Activated naive CD8-positive, alpha-beta T cell treated with anti-CD3 and anti-CD28 coated beads, Interleukin-2, amount 10 ng/mL, durations not matched to agents 7 days and 5 days (primary cell): ENCODE measurements at regions of chr19 and their contacts with region 1.

Region 1: GRCh38 chr19:21505459-21506451 is at the start of gene ZNF429:
- DNase-seq: peak; percentile 79
- ATAC-seq: peak; percentile 100
- H3K4me3 Mint-ChIP-seq: peak within 1 kb of the TSS; percentile 99
- H3K27ac Mint-ChIP-seq: peak within 1 kb of the TSS; percentile 99
- H3K4me1 Mint-ChIP-seq: peaks cover 10% of the 10 kb centered on the region
- H3K27me3 Mint-ChIP-seq: no peaks in the 10 kb centered on the region
- total RNA-seq, gene ZNF429: 14.3 to 14.8 TPM

Region 2: GRCh38 chr19:20923077-20923871 is 582.5 kb before region 1 on chr19 and contains the start of gene ZNF85:
- POLR2A ChIA-PET with region 1: interaction called, 16 read pairs
- DNase-seq: peak; percentile 85
- ATAC-seq: peak; percentile 99
- H3K4me3 Mint-ChIP-seq: peak within 1 kb of the TSS; percentile 97
- H3K27ac Mint-ChIP-seq: peak within 1 kb of the TSS; percentile 99
- H3K4me1 Mint-ChIP-seq: peaks cover 13% of the 10 kb centered on the region
- H3K27me3 Mint-ChIP-seq: no peaks in the 10 kb centered on the region
- total RNA-seq, gene ZNF85: 22.7 to 25.0 TPM

Region 3: GRCh38 chr19:21328885-21329605 is 176.7 kb before region 1 on chr19 and contains the start of gene ZNF708:
- POLR2A ChIA-PET with region 1: interaction called, 17 read pairs
- DNase-seq: peak; percentile 77
- ATAC-seq: peak; percentile 100
- H3K4me3 Mint-ChIP-seq: peak within 1 kb of the TSS; percentile 99
- H3K27ac Mint-ChIP-seq: peak within 1 kb of the TSS; percentile 99
- H3K4me1 Mint-ChIP-seq: peaks cover 17% of the 10 kb centered on the region
- H3K27me3 Mint-ChIP-seq: no peaks in the 10 kb centered on the region
- total RNA-seq, gene ZNF708: 28.5 to 30.7 TPM

Region 4: GRCh38 chr19:21482863-21483276 is 22.9 kb before region 1 on chr19:
- POLR2A ChIA-PET with region 1: interaction called, 11 read pairs
- DNase-seq: peak; percentile 72
- ATAC-seq: peak; percentile 84
- H3K4me3 Mint-ChIP-seq: peak overlapping the region; percentile 26
- H3K27ac Mint-ChIP-seq: no peak overlapping the region
- H3K4me1 Mint-ChIP-seq: no peaks in the 10 kb centered on the region
- H3K27me3 Mint-ChIP-seq: no peaks in the 10 kb centered on the region

Region 5: DNA sequence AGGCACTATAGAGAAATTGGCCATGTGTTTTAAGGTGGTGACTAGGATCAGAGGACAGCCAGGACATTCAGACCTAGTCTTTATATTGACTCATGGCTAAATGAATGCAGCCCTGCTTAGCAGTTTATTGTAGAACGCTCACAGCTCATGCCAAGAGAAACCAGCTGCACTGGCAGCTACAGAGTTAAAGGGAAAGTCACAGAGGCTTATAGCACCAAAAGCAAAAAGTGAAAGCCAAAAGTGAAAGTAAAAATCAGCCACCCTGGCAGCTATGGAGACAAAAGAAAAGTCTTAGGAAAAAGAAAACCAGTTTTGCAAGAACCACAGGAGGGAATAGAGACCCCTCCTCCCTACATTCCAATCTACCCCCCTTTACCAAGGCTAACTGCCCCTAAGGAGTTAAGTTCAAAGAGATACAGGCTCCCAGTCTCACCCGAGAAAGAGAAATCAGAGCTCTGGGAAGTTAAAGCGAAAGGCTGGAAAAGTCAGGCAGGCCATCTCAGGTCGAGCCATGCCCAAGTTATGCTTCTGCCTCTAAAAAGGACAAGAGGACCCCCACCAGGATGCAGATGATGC is 98.7 kb after region 1 on chr19:
- POLR2A ChIA-PET with region 1: interaction called, 10 read pairs
- DNase-seq: no peak
- ATAC-seq: peak; percentile 61
- H3K4me3 Mint-ChIP-seq: peak overlapping the region; percentile 87
- H3K27ac Mint-ChIP-seq: peak overlapping the region; percentile 91
- H3K4me1 Mint-ChIP-seq: peaks cover 16% of the 10 kb centered on the region
- H3K27me3 Mint-ChIP-seq: no peaks in the 10 kb centered on the region

Region 6: DNA sequence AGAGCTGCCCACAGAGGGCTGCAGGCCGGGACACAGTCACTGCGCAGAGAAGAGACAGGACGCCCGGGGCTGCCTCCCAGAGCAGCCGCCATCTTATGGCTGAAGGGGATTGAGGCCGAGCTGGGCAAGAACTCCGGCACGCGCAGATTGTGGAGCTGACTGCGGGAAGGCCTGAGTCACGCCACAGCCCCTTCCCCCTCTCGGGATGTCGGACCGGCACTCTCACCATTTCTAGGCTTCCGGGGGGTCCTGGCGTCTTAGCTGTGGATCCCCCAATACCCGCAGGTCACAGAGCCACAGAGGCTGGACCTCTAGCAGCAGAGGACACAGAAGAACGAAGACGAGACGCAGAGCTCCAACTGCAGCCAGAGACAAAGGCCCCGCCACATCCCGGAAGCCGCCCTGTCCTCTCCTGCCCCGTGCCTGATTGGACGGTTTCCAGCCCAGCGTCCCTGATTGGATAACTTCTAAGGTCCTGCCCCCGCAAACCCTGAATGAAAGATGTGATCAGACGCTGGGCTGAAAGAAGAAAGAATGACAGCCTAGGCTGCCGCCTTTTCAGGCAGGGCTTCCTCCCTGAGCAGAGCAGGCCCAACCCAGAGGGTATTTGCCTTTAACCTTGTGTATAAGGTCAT is 330.2 kb after region 1 on chr19 and contains the start of gene ZNF43:
- POLR2A ChIA-PET with region 1: interaction called, 15 read pairs
- DNase-seq: peak; percentile 84
- ATAC-seq: peak; percentile 99
- H3K4me3 Mint-ChIP-seq: peak within 1 kb of the TSS; percentile 98
- H3K27ac Mint-ChIP-seq: peak within 1 kb of the TSS; percentile 100
- H3K4me1 Mint-ChIP-seq: peaks cover 10% of the 10 kb centered on the region
- H3K27me3 Mint-ChIP-seq: no peaks in the 10 kb centered on the region
- total RNA-seq, gene ZNF43: 36.5 to 39.8 TPM